GM18951 (cell line): ENCODE measurements at regions of chr4 and their contacts with region 1.

Region 1: GRCh38 chr4:26459054-26459755 is 31.1 kb downstream of the CCKAR start:
- POLR2A ChIP-seq: no peak

Region 2: DNA sequence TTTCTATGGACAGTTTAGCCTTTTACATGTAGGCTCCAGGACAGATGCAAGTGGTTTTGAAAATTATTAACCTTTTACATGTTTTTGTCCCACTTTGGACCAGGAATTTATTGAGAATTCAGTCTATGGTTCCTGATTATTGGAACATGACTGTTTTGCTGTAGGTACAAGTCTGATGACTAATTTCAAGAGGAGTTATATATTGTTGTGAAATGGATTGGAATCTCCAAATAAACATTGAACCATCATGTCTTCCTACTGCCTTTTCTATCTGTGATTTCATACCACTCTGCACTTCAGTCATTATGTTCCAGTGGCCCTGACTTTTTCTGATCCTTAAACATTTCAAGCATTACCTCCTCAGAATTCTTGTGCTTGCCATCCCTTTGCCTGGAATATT is 160.6 kb after region 1 on chr4:
- in situ Hi-C with region 1: no loop called
- POLR2A ChIP-seq: no peak

Region 3: DNA sequence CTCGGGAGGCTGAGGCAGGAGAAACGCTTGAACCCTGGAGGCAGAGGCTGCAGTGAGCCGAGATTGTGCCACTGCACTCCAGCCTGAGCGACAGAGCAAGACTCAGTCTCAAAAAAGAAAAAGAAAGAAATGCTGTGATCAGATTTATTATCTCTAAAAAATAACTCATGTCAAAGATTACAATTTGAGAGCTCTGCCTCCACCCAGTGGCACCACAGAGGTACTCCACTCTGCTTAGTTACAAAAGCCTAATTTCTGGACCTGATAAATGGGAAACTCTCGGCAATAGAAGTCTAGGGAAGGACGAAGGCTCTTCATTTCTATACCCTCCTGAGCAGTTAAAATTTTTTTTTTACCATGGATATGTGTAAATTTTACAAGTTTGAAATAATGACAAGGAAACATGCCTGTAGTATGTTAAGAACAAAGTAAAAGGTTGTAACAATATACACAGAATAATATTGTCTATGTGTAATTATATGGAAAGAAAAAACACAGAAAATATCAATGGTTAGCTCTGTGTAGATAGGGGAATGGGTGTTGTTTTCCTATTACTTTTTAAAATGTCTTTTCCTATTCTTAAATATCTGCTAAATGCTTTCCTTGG is 551.2 kb after region 1 on chr4:
- in situ Hi-C with region 1: loop called (anchors 25 kb)
- POLR2A ChIP-seq: no peak